Colonic mucosa (tissue), 4 donors: ENCODE measurements at regions of chr20 and their contacts with region 1.

Region 1: GRCh38 chr20:58963064-58963584 is 17.9 kb upstream of the NELFCD start:
- DNase-seq: no peak
- H3K4me3 ChIP-seq: no peak overlapping the region
- H3K27ac ChIP-seq: no peak overlapping the region
- H3K4me1 ChIP-seq: no peaks in the 10 kb centered on the region
- H3K27me3 ChIP-seq: no peaks in the 10 kb centered on the region
- CTCF ChIP-seq: no peak

Region 2: DNA sequence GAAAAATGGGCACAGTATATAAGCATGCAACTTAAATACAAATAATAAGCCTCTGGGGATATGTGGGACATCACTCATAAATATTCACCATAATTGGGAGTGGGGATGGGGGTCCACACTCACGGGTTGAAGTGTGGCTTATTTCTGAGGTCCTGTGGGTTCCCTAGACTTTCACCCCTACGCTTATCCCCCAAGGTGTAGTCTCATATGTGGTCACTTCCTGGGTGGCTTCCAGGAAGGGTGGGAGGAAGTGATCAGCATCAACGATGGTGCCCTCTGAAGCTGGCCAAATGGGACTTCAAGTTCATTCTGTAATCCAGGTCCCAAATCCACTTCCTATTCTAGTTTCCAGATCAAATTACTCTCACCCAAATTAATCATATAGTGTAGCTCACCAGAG is 51.2 kb before region 1 on chr20:
- intact Hi-C with region 1: loop called (anchors 10 kb)
- DNase-seq: no peak
- H3K4me3 ChIP-seq: no peak overlapping the region
- H3K27ac ChIP-seq: no peak overlapping the region
- H3K4me1 ChIP-seq: peaks cover 4% of the 10 kb centered on the region
- H3K27me3 ChIP-seq: no peaks in the 10 kb centered on the region
- CTCF ChIP-seq: no peak

Region 3: DNA sequence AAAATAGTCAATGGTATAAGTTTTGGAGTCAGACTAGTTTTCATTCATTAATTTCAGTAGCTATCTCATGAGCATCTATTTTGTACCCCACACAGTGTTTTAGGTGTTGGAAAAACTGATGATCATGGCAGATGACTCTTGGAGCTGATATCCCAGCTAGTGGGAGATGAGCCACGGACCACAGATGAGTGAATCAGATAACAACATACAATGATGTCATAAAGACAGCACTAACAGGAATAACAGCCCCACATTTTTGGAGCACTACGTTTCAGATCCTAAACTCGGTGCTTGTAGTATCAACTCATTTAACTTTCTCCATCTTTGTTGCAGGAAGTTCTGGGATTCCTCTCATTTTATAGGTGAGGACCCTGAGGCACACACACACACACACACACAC is 269.5 kb after region 1 on chr20:
- intact Hi-C with region 1: no loop called
- DNase-seq: no peak
- H3K4me3 ChIP-seq: no peak overlapping the region
- H3K27ac ChIP-seq: no peak overlapping the region
- H3K4me1 ChIP-seq: no peaks in the 10 kb centered on the region
- H3K27me3 ChIP-seq: no peaks in the 10 kb centered on the region
- CTCF ChIP-seq: no peak